ENCODE measurements at regions of chrX and their contacts with region 1.

Region 1: GRCh38 chrX:149286940-149287349 is 218.2 kb downstream of the IDS start:
- DNase-seq: peak; percentile 10
- H3K4me3 Mint-ChIP-seq: no peak overlapping the region
- H3K27ac Mint-ChIP-seq: no peak overlapping the region
- H3K4me1 Mint-ChIP-seq: peaks cover 20% of the 10 kb centered on the region
- H3K27me3 Mint-ChIP-seq: no peaks in the 10 kb centered on the region

Region 2: GRCh38 chrX:148049441-148049840 is 1237.5 kb before region 1 on chrX:
- intact Hi-C with region 1: loop called (anchors 2 kb)
- DNase-seq: no peak
- H3K4me3 Mint-ChIP-seq: no peak overlapping the region
- H3K27ac Mint-ChIP-seq: no peak overlapping the region
- H3K4me1 Mint-ChIP-seq: no peaks in the 10 kb centered on the region
- H3K27me3 Mint-ChIP-seq: peaks cover 4% of the 10 kb centered on the region

Region 3: DNA sequence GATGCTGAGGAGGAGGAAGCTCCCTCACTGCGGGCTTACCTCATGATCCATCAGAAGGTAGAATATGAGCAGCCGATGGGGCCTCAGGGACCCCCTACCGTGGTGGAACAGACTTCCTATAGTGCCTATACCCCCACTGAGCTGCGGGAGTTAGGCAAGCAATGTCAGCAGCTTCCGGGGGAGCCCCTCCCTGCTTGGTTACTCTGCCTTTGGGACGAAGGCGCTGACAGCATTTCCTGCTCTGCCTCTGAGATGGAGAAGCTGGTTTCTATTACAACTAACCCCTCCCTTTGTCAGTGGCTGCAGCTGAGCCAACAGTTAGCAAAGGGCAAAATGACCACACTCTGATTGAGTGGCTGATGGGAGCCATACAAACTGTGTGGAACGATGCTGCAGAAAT is 212.5 kb before region 1 on chrX:
- intact Hi-C with region 1: no loop called
- DNase-seq: peak; percentile 8
- H3K4me3 Mint-ChIP-seq: no peak overlapping the region
- H3K27ac Mint-ChIP-seq: no peak overlapping the region
- H3K4me1 Mint-ChIP-seq: peaks cover 2% of the 10 kb centered on the region
- H3K27me3 Mint-ChIP-seq: no peaks in the 10 kb centered on the region

Region 4: GRCh38 chrX:149131774-149132173 is 155.2 kb before region 1 on chrX:
- intact Hi-C with region 1: no loop called
- DNase-seq: no peak
- H3K4me3 Mint-ChIP-seq: no peak overlapping the region
- H3K27ac Mint-ChIP-seq: no peak overlapping the region
- H3K4me1 Mint-ChIP-seq: no peaks in the 10 kb centered on the region
- H3K27me3 Mint-ChIP-seq: peaks cover 3% of the 10 kb centered on the region

Region 5: DNA sequence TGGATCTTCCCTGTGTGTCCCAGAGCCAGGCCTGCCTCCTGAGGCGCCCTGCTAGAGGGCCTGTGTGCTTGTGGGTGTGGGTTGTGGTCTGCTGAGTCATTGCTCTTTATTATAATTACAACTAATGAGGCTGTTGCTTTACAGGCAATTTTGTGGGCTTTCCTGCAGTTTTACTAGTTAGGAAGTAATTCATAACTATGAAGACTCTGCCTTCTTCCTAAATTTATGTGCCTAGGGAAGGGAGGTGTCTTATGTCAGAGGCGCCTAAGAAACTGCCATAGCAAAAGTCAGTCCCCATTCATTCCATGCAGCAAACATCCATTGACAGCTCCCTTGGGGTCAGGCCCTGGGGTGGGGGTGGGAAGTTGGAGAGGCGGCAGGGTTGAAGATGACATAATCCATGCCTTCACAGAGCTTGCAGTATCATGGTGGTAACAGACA is 141.1 kb before region 1 on chrX:
- intact Hi-C with region 1: loop called (anchors 10 kb)
- DNase-seq: no peak
- H3K4me3 Mint-ChIP-seq: no peak overlapping the region
- H3K27ac Mint-ChIP-seq: no peak overlapping the region
- H3K4me1 Mint-ChIP-seq: peaks cover 3% of the 10 kb centered on the region
- H3K27me3 Mint-ChIP-seq: no peaks in the 10 kb centered on the region

Region 6: GRCh38 chrX:149230689-149231088 is 56.3 kb before region 1 on chrX:
- intact Hi-C with region 1: loop called (anchors 1 kb)
- DNase-seq: no peak
- H3K4me3 Mint-ChIP-seq: no peak overlapping the region
- H3K27ac Mint-ChIP-seq: peak overlapping the region; percentile 78
- H3K4me1 Mint-ChIP-seq: peaks cover 8% of the 10 kb centered on the region
- H3K27me3 Mint-ChIP-seq: no peaks in the 10 kb centered on the region

Region 7: GRCh38 chrX:149470955-149471354 is 184.0 kb after region 1 on chrX:
- intact Hi-C with region 1: loop called (anchors 10 kb)
- DNase-seq: peak; percentile 47
- H3K4me3 Mint-ChIP-seq: no peak overlapping the region
- H3K27ac Mint-ChIP-seq: no peak overlapping the region
- H3K4me1 Mint-ChIP-seq: peaks cover 2% of the 10 kb centered on the region
- H3K27me3 Mint-ChIP-seq: peaks cover 4% of the 10 kb centered on the region